Motor neuron (in vitro differentiated cells): ENCODE measurements at regions of chr11 and their contacts with region 1.

Region 1: DNA sequence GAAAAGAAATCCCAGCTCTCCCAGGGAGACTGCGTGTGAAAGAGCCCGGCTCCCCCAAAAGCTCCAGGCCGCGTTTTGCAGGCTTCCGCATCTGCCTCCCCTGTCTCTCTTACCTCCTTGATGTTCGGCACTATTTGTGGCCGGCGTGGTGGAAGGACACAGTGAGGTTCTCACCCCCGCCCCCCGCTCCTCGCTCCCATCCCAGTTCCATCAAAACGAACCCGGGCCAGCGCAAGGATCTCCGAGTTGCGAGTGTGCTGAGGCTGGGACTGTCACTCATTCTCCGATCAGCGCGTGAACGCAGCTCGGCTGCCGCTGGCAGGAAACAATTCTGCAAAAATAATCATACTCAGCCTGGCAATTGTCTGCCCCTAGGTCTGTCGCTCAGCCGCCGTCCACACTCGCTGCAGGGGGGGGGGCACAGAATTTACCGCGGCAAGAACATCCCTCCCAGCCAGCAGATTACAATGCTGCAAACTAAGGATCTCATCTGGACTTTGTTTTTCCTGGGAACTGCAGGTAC is at the start of gene NCAM1:
- ATAC-seq: peak; percentile 57 to 74 (median 61)
- H3K4me3 ChIP-seq: peak within 1 kb of the TSS; percentile 57 to 79 (median 67)
- H3K27ac ChIP-seq: peak within 1 kb of the TSS; percentile 67 to 85
- H3K4me1 ChIP-seq: peaks cover 14 to 18% of the 10 kb centered on the region in 2 donors
- total RNA-seq, gene NCAM1: 33.9 to 382 (median 290) TPM

Region 2: GRCh38 chr11:112588252-112588694 is 372.9 kb before region 1 on chr11:
- in situ Hi-C with region 1: loop called in 3 of 9 experiments (anchors 25 kb)
- ATAC-seq: peak; percentile 87 to 98 (median 95)
- H3K4me3 ChIP-seq: no peak overlapping the region
- H3K27ac ChIP-seq: peak overlapping the region; percentile 31 to 47
- H3K4me1 ChIP-seq: peaks cover 37 to 43% of the 10 kb centered on the region in 2 donors

Region 3: GRCh38 chr11:112613051-112613972 is 347.9 kb before region 1 on chr11:
- in situ Hi-C with region 1: loop called in 3 of 9 experiments (anchors 25 kb)
- ATAC-seq: peak; percentile 67 to 86 (median 77)
- H3K4me3 ChIP-seq: no peak overlapping the region
- H3K27ac ChIP-seq: peak overlapping the region; percentile 0 to 52
- H3K4me1 ChIP-seq: peaks cover 59 to 87% of the 10 kb centered on the region in 2 donors

Region 4: DNA sequence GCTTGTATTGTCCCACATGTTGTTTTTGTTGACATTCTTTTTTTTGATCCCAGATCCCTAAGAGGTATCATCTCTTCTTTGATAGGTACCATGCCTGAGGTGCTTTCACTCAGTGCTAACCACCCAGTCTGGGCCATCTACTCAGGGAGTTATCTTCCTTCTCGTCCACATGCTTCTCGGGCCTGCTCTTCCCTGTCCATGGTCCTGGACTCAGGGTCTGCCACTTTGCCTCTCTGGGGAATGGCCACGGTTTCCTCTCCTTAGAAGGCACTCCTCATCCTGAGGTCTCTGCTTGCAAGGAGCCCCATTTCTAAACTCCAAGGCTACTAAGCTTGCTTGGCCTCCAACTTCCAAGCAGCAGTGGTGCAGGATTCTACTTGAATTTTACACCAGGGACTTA is 227.0 kb before region 1 on chr11:
- in situ Hi-C with region 1: no loop called
- ATAC-seq: peak in 5 of 8 experiments; percentile 52 to 77 (median 63)
- H3K4me3 ChIP-seq: no peak overlapping the region
- H3K27ac ChIP-seq: no peak overlapping the region
- H3K4me1 ChIP-seq: peaks cover 10 to 19% of the 10 kb centered on the region in 2 donors

Region 5: GRCh38 chr11:112837162-112837826 is 123.9 kb before region 1 on chr11:
- in situ Hi-C with region 1: loop called in 1 of 9 experiments (anchors 25 kb)
- ATAC-seq: peak in 4 of 8 experiments; percentile 25 to 67 (median 51)
- H3K4me3 ChIP-seq: no peak overlapping the region
- H3K27ac ChIP-seq: no peak overlapping the region
- H3K4me1 ChIP-seq: peaks cover 43 to 48% of the 10 kb centered on the region in 2 donors

Region 6: DNA sequence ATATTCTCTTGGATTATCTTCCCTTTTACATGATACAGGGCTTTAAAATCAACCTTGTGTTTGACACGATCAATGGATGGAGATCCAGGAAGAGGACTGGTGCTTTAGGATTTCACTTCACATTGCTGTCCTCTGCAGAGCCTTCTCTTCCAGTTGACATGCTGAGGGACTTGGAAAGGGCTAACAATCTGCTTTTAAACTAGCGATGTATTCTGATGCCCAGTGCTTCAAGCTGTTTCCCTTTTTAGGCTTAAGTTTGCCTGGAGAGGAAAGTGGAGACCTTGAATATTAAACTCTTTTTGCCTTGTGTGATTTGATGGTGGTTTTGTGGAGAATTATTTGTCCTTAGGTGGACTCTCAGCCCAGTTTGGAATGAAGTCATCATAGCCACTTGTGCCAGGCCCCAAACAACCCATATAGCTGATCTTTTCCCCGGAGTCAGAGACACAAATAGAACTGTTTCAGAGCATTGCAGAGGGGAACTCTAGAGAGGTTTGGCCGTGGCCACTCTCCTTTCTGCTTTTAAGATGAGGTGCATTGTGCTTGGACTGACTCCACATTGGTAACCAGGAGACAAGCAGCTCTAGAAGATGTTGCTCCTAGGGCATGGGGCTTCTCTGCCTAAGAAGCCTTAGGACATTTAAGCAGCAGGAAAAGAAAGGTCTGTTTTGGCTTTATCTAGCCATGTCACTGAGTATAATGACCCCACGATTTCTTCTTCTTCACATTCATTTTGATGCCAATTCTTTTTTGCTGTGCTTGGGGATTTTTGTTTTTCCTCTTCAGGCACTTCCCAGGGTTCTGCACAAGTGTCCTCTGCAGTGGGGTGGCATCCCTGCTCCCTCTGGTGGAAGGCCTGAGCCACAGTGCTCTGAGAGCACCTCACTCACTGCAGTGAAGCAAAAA is 152.8 kb after region 1 on chr11:
- in situ Hi-C with region 1: loop called in 1 of 9 experiments (anchors 10 kb)
- ATAC-seq: peak; percentile 81 to 99 (median 92)
- H3K4me3 ChIP-seq: no peak overlapping the region
- H3K27ac ChIP-seq: no peak overlapping the region
- H3K4me1 ChIP-seq: peaks cover 26 to 55% of the 10 kb centered on the region in 2 donors

Region 7: DNA sequence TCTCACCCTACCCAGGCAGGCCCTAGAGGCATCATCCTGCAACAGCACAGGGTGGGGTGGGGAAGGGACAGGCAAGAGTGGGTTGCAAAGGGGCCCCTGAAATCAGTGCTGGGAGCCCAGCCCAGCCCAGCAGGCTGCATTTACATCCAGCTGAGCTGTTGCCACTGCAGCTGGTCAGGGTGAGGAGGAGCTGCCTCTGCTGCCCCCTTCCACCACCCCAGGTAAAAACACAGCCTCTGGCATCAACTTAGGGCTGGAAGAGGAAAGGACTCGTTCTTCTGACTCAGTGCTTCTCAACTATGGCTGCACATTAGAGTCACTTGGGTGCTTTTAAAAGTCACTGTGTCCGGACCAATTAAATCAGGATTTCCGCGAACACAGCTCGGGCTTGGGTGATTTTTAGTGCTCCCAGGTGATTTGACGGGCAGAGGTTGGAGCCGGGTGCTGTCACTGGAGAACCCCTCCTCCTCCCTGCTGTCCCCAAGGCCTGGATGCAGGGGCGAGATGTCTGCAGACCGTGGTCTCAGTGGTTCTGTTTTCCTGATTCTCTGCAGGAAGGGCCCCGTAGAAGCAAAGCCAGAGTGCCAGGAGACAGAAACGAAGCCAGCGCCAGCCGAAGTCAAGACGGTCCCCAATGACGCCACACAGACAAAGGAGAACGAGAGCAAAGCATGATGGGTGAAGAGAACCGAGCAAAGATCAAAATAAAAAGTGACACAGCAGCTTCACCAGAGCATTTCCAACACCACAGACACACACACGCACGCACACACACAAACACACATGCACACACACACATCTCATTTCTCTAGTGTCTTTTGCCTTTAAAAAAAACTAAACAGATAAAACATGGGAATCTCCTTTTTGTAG is 313.7 kb after region 1 on chr11:
- in situ Hi-C with region 1: loop called in 3 of 9 experiments (anchors 25 kb)
- ATAC-seq: peak; percentile 41 to 83 (median 62)
- H3K4me3 ChIP-seq: no peak overlapping the region
- H3K27ac ChIP-seq: no peak overlapping the region
- H3K4me1 ChIP-seq: no peaks in the 10 kb centered on the region